Heart left ventricle (tissue), 16 donors: ENCODE measurements at regions of chr16 and their contacts with region 1.

Region 1: GRCh38 chr16:28258567-28258966 is 33.8 kb upstream of the SBK1 start:
- DNase-seq: peak; percentile 67 to 86 (median 74)
- ATAC-seq: peak; percentile 50 to 78 (median 70)
- H3K4me3 ChIP-seq: peak overlapping the region; percentile 30 to 65 (median 58)
- H3K27ac ChIP-seq: peak overlapping the region; percentile 21 to 90 (median 79)
- H3K4me1 ChIP-seq: peaks cover 0 to 32% (median 0%) of the 10 kb centered on the region in 12 donors
- H3K27me3 ChIP-seq: peaks cover 0 to 24% (median 5%) of the 10 kb centered on the region in 9 donors
- CTCF ChIP-seq: no peak
- POLR2A ChIP-seq: peak; percentile 59 to 62

Region 2: DNA sequence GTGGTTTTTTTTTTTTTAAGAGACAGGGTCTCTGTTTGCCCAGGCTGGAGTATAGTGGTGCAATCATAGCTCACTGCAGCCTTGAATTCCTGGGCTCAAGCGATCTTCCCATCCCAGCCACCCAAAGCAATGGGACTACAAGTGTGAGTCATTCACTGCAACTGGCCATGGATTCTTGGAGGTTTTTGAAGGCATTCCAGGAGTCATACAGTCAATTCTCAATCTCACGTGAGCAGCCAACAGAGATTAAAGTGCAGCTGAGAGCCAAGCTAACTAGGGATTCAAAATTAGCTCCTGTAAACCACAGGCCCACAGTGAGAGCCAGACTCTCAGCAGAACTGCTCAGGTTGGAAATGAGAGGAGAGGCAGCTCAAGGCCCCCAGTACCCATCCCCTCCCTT is 77.1 kb before region 1 on chr16:
- intact Hi-C with region 1: loop called in 2 of 10 experiments (anchors 2 to 5 kb)
- DNase-seq: peak in 3 of 5 donors; percentile 18 to 45 (median 34)
- ATAC-seq: peak; percentile 72 to 90 (median 88)
- H3K4me3 ChIP-seq: no peak overlapping the region
- H3K27ac ChIP-seq: peak overlapping the region in 9 of 12 donors; percentile 24 to 78 (median 54)
- H3K4me1 ChIP-seq: peaks cover 4 to 63% (median 37%) of the 10 kb centered on the region in 12 donors
- H3K27me3 ChIP-seq: no peaks in the 10 kb centered on the region
- CTCF ChIP-seq: no peak
- POLR2A ChIP-seq: no peak

Region 3: GRCh38 chr16:28211712-28212534 is 46.6 kb before region 1 on chr16 and contains the start of gene XPO6:
- intact Hi-C with region 1: loop called in 1 of 10 experiments (anchors 5 kb)
- DNase-seq: peak; percentile 96 to 98 (median 96)
- ATAC-seq: peak; percentile 92 to 97 (median 95)
- H3K4me3 ChIP-seq: peak within 1 kb of the TSS; percentile 48 to 89 (median 78)
- H3K27ac ChIP-seq: peak within 1 kb of the TSS; percentile 57 to 93 (median 88)
- H3K4me1 ChIP-seq: peaks cover 0 to 32% (median 15%) of the 10 kb centered on the region in 12 donors
- H3K27me3 ChIP-seq: no peaks in the 10 kb centered on the region
- CTCF ChIP-seq: no peak
- POLR2A ChIP-seq: peak in 1 of 2 donors; percentile 60
- total RNA-seq, gene XPO6: 19.8 to 78.0 (median 33.0) TPM